Activated T-helper 1 cell treated with anti-CD3 and anti-CD28 coated beads, Interleukin-12 subunit alpha, Interleukin-12 subunit beta, Interleukin-2, Interleukin-4 antibody, amounts not matched to agents 30 ng/mL and 10 ng/mL and 1 ng/mL, durations not matched to agents 14 hours and 24 hours and 36 hours (primary cell): ENCODE measurements at regions of chr21 and their contacts with region 1.

Region 1: DNA sequence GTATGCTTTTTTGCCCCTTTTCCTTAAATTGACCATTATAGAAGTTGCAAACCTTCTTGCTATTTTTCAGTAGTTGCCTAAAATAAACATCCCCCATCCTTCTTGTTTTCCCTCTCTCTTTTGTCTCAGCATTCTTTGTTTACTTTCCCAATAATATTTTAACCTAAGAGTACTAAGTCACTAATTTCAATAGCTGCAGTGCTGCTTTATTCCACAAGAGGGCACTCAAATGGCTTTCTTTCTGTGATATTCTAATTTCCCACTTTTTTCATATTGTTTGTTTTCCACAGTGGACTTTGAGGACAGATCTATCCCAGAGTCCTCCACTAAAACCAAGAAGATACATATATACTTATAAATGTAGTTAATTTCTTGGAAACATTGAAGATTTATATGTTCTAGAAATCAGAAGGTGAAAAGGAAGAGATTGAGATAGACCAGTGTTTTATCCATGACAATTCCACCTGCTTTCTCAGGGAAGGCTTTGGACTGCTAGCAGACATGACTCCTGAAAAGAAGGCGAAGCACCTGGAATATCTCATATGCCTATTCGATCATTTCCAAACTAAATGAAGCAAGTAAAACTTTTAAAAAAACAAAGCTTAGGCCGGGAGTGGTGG is 104.8 kb upstream of the GRIK1 start:
- DNase-seq: no peak
- H3K4me3 Mint-ChIP-seq: no peak overlapping the region
- H3K27ac Mint-ChIP-seq: no peak overlapping the region
- H3K4me1 Mint-ChIP-seq: no peaks in the 10 kb centered on the region
- H3K27me3 Mint-ChIP-seq: no peaks in the 10 kb centered on the region

Region 2: GRCh38 chr21:30194701-30195299 is 150.2 kb after region 1 on chr21:
- intact Hi-C with region 1: loop called (anchors 1 kb)
- DNase-seq: no peak
- H3K4me3 Mint-ChIP-seq: no peak overlapping the region
- H3K27ac Mint-ChIP-seq: no peak overlapping the region
- H3K4me1 Mint-ChIP-seq: no peaks in the 10 kb centered on the region
- H3K27me3 Mint-ChIP-seq: no peaks in the 10 kb centered on the region